Posterior cingulate gyrus (tissue), 11 donors: ENCODE measurements at regions of chr16 and their contacts with region 1.

Region 1: DNA sequence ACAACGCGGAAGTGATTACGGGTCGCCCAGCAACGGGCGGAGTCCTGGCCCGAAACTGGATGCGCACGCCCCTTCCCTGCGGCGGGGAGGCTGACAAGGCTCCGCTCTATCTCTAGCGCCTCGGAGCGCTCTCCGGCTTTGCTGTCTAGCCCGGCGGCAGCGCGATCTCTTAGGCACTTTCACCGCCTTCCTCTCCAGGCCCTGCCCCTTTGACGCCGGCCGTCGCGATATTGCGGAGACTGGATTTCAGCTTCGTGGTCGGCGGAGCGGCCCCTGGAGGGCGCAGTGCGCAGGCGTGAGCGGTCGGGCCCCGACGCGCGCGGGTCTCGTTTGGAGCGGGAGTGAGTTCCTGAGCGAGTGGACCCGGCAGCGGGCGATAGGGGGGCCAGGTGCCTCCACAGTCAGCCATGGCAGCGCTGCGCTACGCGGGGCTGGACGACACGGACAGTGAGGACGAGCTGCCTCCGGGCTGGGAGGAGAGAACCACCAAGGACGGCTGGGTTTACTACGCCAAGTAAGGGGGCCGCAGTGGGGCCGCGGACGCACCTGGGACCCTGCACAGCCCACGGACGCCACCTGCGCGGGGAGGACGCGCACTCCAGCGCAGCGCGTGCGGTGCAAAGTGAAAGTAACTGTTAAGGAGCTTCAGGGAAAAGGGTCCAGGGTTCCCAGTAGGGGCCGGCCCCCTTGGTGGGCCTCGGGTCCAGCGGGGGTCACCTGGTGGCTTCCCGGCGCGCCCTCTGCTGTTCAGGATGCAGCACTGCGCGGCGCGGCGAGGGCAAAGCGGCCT is at the start of gene WWOX:
- DNase-seq: peak; percentile 92 to 99 (median 94)

Region 2: DNA sequence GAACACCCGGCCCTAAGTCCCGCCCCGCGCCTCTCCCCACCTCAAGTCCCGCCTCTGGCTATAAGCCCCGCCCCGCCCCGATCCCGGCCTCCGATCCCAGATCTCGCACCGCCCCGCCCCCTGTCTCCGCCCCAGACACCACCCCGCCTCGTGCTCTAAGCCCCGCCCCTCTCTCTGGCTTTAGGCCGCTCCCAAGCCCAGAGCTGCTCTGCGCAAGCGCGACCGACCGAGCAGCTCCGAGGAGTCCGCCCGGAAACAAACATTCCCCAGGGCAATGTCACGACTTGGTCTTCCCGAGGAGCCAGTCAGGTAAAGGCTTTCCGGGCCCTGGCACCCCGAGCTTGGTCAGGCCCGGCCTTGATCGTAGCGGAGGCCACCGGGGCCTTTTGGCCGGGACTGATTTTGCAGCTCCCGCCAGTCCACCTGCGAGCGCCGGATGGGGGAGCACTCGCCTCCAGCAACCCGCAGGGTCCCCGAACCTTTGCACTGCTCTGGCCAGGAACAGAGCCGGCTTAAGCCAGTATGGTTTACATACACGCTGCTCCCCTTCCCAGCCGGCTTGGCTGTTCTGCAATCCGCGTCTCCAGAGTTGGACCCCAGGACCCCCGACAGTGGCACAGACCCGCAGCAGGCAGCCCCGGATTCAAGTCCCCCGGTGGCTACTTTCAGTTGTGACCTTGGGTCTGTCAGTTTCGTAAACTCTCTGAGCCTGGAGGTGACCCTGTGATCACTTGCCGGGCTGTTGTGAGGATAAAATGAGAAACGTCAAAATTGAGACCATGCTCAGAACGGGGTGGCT is 377.1 kb before region 1 on chr16 and contains the start of gene NUDT7:
- intact Hi-C with region 1: loop called (anchors 5 kb)
- DNase-seq: peak; percentile 96 to 100 (median 98)

Region 3: DNA sequence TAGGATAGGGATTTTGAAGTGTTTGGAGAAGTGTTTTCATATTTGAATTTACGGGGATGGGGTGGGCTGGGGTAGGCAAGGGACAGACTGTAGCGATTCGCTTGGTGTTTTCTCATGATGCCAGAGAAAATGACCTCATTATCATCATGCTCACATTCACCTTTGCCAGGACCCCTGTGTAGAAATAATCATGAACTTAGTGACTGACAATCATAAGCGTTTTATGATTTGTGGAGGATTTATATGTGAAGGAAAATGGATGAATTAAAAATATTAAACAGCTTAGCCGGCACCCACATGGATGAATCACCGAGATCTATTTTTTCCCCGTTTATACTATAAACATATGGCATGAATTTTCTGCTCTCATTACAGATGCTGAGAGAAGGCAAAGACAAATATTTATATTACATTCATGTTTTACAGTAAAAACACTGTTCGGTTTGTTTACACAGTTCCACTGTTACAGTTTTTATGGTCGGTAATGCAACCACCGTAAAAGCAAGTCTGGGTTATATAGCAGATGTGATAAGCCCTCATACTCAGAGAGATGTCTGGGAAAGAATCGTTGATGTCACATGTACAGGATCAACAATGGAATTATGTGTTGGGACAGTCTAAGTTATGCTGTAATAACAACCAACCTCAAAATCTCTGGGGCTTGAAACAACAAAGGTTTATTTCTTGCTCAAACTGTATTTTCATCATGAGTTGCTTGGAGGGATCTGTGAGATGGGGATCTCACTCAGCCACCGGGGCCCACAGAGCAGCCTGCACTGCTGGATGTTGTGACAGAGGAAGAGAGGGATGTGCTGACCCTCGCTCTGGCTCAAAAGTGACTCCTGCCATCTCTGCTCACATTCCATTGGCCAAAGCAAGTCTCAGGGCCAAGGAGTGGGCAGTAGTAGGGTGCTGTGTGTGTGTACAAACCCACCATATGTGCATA is 84.9 kb after region 1 on chr16:
- intact Hi-C with region 1: no loop called
- DNase-seq: peak in 1 of 10 donors; percentile 9

Region 4: DNA sequence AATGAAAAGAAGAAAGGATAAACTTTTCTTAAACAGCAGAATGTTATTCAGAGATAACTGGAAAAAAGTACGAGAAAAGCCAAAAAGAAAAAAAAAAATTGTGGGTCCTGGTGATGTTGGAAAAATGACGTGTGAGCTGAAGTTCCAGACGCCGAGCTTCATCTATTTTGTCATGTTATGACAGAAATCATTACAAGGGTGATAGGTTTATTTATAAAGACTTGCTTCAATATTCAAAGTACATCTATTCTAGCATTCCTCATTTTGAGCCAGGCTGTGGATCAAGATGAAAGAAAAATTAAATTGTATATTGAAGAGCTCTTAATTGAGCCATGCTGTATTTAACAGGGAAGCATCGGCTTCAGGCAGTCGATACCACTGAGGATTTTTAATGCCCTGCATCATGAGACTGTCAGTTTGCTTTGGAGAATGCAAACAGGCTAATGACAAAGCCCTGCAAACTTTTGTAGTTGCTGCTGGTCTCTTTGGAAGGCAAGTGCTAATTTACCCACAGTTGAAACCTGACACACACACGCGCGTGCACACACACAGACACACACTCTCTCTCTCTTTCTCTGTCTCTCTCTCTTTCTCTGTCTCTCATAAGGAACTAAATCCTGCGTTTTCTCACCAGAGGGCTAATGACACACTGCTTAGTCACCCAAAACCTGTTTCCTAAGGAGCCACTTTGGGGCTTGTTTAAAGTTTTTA is 110.5 kb after region 1 on chr16:
- intact Hi-C with region 1: no loop called
- DNase-seq: no peak